ENCODE measurements at regions of chr3 and their contacts with region 1.

Region 1: DNA sequence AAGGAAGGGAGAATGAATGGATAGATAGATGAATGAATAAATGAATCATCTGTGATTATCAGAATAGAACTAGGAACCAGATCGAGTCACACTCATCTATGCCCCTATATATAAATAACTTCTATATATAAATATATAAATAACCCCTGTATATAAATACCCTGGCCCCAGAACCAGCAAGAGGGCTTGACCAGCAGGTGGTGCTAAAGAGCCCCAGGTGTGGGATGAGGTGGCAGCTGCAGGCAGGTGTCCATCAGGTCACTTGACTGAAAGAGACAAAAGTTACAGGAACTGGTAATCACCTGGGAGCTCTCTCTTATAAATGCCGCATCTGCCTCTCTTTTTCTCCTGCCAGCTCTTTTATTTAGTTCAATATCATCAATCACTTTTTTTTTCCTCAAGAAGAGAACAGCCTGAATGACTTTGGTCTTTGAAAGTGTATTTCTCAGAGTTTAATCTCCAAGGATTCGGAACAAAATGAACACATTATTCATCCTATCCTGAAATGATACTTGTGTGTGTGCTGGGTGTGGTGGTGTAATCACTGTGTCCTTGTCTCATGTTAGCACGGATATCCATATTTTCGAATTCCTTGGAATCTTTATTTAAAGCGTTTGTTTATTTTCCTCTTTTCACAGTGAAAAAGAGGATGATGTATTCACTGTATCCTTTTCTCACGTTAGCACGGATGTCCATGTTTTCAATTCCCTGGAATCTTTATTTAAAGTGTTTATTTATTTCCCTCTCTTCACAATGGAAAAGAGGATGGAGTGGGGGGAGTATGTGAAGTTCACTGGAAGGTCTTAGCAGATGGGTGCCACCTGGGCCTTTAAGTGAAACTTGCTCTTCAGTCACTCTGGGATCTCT is 35.4 kb upstream of the ATG7 start:
- DNase-seq: peak; percentile 86
- H3K4me3 Mint-ChIP-seq: no peak overlapping the region
- H3K27ac Mint-ChIP-seq: no peak overlapping the region
- H3K4me1 Mint-ChIP-seq: peaks cover 5% of the 10 kb centered on the region
- H3K27me3 Mint-ChIP-seq: peaks cover 23% of the 10 kb centered on the region

Region 2: GRCh38 chr3:11178421-11178820 is 58.4 kb before region 1 on chr3:
- CTCF ChIA-PET with region 1: no interaction called
- DNase-seq: no peak
- H3K4me3 Mint-ChIP-seq: no peak overlapping the region
- H3K27ac Mint-ChIP-seq: no peak overlapping the region
- H3K4me1 Mint-ChIP-seq: no peaks in the 10 kb centered on the region
- H3K27me3 Mint-ChIP-seq: peaks cover 15% of the 10 kb centered on the region

Region 3: GRCh38 chr3:11335056-11335608 is 98.3 kb after region 1 on chr3:
- CTCF ChIA-PET with region 1: interaction called, 91 read pairs
- DNase-seq: peak; percentile 24
- H3K4me3 Mint-ChIP-seq: no peak overlapping the region
- H3K27ac Mint-ChIP-seq: no peak overlapping the region
- H3K4me1 Mint-ChIP-seq: no peaks in the 10 kb centered on the region
- H3K27me3 Mint-ChIP-seq: no peaks in the 10 kb centered on the region